ENCODE measurements at regions of chr2 and their contacts with region 1.

Region 1: DNA sequence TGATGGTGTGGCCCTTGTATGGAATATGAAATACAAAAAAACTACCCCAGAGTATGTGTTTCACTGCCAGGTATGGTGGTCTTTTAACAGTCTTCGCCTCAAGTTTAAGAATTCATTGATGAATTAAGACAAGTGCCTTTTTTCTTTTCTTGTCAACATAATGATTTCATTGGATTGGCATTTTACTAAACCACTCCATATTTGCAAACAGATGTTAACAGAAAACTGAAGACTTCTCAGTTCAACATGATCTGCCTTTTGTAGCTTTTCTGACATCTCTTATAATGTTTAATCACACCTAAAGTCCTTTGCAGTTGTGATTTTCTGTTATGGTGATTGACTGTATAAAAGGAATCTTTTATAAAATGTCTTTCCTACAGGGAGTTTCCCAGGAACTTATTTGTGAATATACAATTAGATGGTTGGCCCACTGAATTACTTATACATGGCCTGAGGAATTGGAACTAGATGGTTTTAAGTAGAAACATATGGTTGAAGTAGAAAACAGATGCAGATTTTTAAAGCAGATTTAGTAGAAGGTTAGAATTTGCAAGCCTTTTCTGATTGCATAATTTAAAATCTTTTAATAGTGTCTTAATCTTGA is 39.7 kb downstream of the DYNC1I2 start:
- DNase-seq: no peak
- ATAC-seq: no peak
- H3K4me3 ChIP-seq: no peak overlapping the region
- H3K27ac ChIP-seq: no peak overlapping the region
- H3K4me1 ChIP-seq: no peaks in the 10 kb centered on the region
- H3K27me3 ChIP-seq: no peaks in the 10 kb centered on the region
- CTCF ChIP-seq: no peak

Region 2: GRCh38 chr2:171991027-171991426 is 264.1 kb after region 1 on chr2:
- CTCF ChIA-PET with region 1: no interaction called
- POLR2A ChIA-PET with region 1: interaction called, 14 read pairs
- intact Hi-C with region 1: no loop called
- DNase-seq: no peak
- ATAC-seq: no peak
- H3K4me3 ChIP-seq: no peak overlapping the region
- H3K27ac ChIP-seq: no peak overlapping the region
- H3K4me1 ChIP-seq: no peaks in the 10 kb centered on the region
- H3K27me3 ChIP-seq: no peaks in the 10 kb centered on the region
- CTCF ChIP-seq: no peak